ENCODE measurements at regions of chr2 and their contacts with region 1.

Region 1: DNA sequence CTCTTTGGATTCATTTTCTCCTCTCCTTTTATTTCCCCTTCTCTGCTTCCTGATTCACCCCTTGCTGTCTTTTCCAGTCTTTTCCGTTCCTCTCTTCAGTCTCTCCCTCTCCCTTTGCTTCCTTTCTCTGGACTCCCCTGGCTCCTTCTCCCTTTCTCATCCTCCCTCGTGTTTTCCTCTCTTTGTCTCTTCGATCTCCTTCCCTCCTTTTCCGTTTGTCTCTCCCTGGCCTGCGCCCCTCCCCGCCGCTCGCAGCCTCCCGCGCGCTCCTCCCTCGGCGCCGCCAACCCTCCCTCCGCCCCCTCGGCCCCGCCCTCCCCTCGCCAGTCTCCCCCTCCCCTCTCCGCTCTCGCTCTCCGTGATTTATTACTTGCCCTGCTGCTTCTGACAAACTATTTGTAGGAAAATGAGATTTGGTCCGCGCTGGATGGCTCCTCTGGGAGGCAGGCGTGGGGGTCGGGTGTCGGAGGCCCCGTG is 46.0 kb upstream of the PAX8 start:
- DNase-seq: peak; percentile 65
- H3K4me3 ChIP-seq: peak overlapping the region; percentile 56 to 86 (median 67)
- H3K27ac ChIP-seq: peak overlapping the region; percentile 86
- H3K4me1 ChIP-seq: peaks cover 45% of the 10 kb centered on the region
- H3K27me3 ChIP-seq: no peaks in the 10 kb centered on the region
- CTCF ChIP-seq: no peak

Region 2: GRCh38 chr2:113219889-113220641 is 104.7 kb before region 1 on chr2:
- CTCF ChIA-PET with region 1: no interaction called
- dilution Hi-C with region 1: no loop called
- in situ Hi-C with region 1: no loop called
- intact Hi-C with region 1: no loop called
- DNase-seq: no peak
- H3K4me3 ChIP-seq: no peak overlapping the region
- H3K27ac ChIP-seq: no peak overlapping the region
- H3K4me1 ChIP-seq: peaks cover 22% of the 10 kb centered on the region
- H3K27me3 ChIP-seq: no peaks in the 10 kb centered on the region
- CTCF ChIP-seq: no peak

Region 3: DNA sequence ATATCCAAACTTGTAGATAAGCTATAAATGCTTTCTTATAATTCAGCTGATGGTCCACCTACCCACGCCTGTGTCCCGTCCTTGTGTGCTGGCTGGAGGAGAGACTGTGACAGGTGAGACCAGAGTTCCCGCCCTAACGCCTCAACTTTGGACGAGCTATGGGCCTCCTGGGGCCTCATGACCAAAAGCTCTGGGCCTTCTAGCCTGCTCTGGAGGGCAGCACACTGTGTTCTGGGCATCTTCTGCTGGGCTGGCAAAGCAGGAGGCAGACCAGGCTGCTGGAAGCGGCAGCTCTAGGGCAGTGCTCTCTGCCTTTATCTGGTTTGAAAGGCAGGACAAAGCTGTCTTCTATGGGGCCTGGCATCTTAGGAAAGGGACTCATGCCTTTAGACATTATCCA is 20.0 kb before region 1 on chr2:
- CTCF ChIA-PET with region 1: no interaction called
- dilution Hi-C with region 1: no loop called
- in situ Hi-C with region 1: no loop called
- intact Hi-C with region 1: loop called (anchors 2 kb)
- DNase-seq: no peak
- H3K4me3 ChIP-seq: no peak overlapping the region
- H3K27ac ChIP-seq: no peak overlapping the region
- H3K4me1 ChIP-seq: peaks cover 16% of the 10 kb centered on the region
- H3K27me3 ChIP-seq: no peaks in the 10 kb centered on the region
- CTCF ChIP-seq: no peak

Region 4: GRCh38 chr2:113357071-113357470 is 32.3 kb after region 1 on chr2:
- CTCF ChIA-PET with region 1: no interaction called
- dilution Hi-C with region 1: loop called (anchors 5 kb)
- in situ Hi-C with region 1: no loop called
- intact Hi-C with region 1: no loop called
- DNase-seq: no peak
- H3K4me3 ChIP-seq: no peak overlapping the region
- H3K27ac ChIP-seq: no peak overlapping the region
- H3K4me1 ChIP-seq: peaks cover 24% of the 10 kb centered on the region
- H3K27me3 ChIP-seq: no peaks in the 10 kb centered on the region
- CTCF ChIP-seq: no peak

Measured in mammary epithelial cell (primary cell).